PC-3 (cell line): ENCODE measurements at regions of chr7 and their contacts with region 1.

Region 1: GRCh38 chr7:84025332-84025927 is 169.2 kb downstream of the SEMA3A start:
- DNase-seq: peak; percentile 88
- ATAC-seq: peak; percentile 55
- H3K4me3 ChIP-seq: no peak overlapping the region
- H3K27ac ChIP-seq: peak overlapping the region; percentile 91
- H3K4me1 ChIP-seq: peaks cover 50% of the 10 kb centered on the region
- H3K27me3 ChIP-seq: no peaks in the 10 kb centered on the region
- CTCF ChIP-seq: no peak

Region 2: DNA sequence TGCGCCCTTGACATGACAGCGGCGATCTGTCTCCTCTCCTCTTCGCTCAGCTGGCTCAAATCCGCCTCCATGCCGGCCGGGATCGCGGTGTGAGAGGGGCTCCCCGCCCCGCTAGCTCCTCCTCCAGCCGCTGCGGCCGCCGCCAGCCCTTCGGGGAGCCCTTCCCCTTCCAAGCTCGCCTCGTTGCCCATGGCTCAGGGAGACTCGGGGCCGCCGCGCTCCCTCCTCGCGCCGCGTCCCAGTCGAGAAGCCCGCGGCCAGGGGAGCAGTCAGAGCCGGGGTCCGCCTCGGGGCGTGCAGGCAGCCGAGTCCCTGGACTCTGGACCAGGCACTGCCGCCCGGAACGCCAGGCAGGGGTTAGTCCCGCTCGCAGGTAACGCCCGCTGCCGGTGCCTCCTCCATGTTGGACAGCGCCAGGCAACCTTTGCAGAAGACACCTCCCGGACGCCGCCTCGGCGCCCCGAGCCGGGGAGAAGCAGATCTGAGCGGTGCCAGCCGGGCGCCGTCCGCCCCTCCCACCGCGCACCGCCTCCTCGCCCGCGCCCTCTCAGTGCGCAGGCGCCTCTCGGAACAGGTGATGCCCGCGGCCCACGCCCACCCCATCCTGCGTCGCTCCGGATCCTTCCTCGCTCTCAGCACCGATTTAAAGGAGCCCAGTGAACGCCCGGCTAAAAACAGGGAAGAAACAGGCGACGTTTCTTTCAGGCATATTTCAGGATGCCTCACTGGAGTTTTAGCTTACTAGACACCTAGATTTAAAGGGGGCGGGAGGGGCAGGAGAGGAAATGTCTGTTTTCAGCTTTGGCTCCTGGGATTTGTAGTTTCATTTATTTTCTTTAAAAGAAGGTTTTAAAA is 862.8 kb before region 1 on chr7 and contains the start of gene PCLO:
- CTCF ChIA-PET with region 1: no interaction called
- POLR2A ChIA-PET with region 1: no interaction called
- intact Hi-C with region 1: no loop called
- DNase-seq: peak; percentile 96
- ATAC-seq: peak; percentile 89
- H3K4me3 ChIP-seq: peak within 1 kb of the TSS; percentile 95
- H3K27ac ChIP-seq: peak within 1 kb of the TSS; percentile 38; the same call in 1 of the 2 replicates
- H3K4me1 ChIP-seq: peaks cover 30% of the 10 kb centered on the region
- H3K27me3 ChIP-seq: no peaks in the 10 kb centered on the region
- CTCF ChIP-seq: no peak
- total RNA-seq, gene PCLO: 3.5 and 7.5 TPM in 2 replicates

Region 3: GRCh38 chr7:84058311-84059076 is 33.1 kb after region 1 on chr7:
- CTCF ChIA-PET with region 1: no interaction called
- POLR2A ChIA-PET with region 1: interaction called, 3 read pairs
- intact Hi-C with region 1: loop called (anchors 2 kb)
- DNase-seq: peak; percentile 88
- ATAC-seq: peak; percentile 60
- H3K4me3 ChIP-seq: peak overlapping the region; percentile 39; the same call in 1 of the 2 replicates
- H3K27ac ChIP-seq: peak overlapping the region; percentile 93
- H3K4me1 ChIP-seq: peaks cover 59% of the 10 kb centered on the region
- H3K27me3 ChIP-seq: no peaks in the 10 kb centered on the region
- CTCF ChIP-seq: no peak

Region 4: GRCh38 chr7:84085147-84085546 is 59.7 kb after region 1 on chr7:
- CTCF ChIA-PET with region 1: no interaction called
- POLR2A ChIA-PET with region 1: no interaction called
- intact Hi-C with region 1: no loop called
- DNase-seq: peak; percentile 58
- ATAC-seq: peak; percentile 70
- H3K4me3 ChIP-seq: no peak overlapping the region
- H3K27ac ChIP-seq: 0 out of 2 replicates have a peak overlapping the region, but pooled peaks have one; percentile 2
- H3K4me1 ChIP-seq: peaks cover 23% of the 10 kb centered on the region
- H3K27me3 ChIP-seq: no peaks in the 10 kb centered on the region
- CTCF ChIP-seq: no peak